Activated CD4-positive, alpha-beta T cell treated with anti-CD3 and anti-CD28 coated beads, Interleukin-2, amount 10 ng/mL, durations not matched to agents 24 days and 14 days (primary cell): ENCODE measurements at regions of chr10 and their contacts with region 1.

Region 1: GRCh38 chr10:28179006-28179742 is 123.7 kb downstream of the MPP7 start:
- DNase-seq: peak; percentile 85
- H3K4me3 Mint-ChIP-seq: peak overlapping the region; percentile 76
- H3K27ac Mint-ChIP-seq: peak overlapping the region; percentile 85
- H3K4me1 Mint-ChIP-seq: peaks cover 23% of the 10 kb centered on the region
- H3K27me3 Mint-ChIP-seq: peaks cover 8% of the 10 kb centered on the region

Region 2: GRCh38 chr10:27446091-27446918 is 732.9 kb before region 1 on chr10:
- intact Hi-C with region 1: loop called (anchors 1 kb)
- DNase-seq: no peak
- H3K4me3 Mint-ChIP-seq: no peak overlapping the region
- H3K27ac Mint-ChIP-seq: no peak overlapping the region
- H3K4me1 Mint-ChIP-seq: peaks cover 8% of the 10 kb centered on the region
- H3K27me3 Mint-ChIP-seq: peaks cover 14% of the 10 kb centered on the region

Region 3: GRCh38 chr10:27536437-27536836 is 642.7 kb before region 1 on chr10:
- intact Hi-C with region 1: no loop called
- DNase-seq: no peak
- H3K4me3 Mint-ChIP-seq: no peak overlapping the region
- H3K27ac Mint-ChIP-seq: no peak overlapping the region
- H3K4me1 Mint-ChIP-seq: peaks cover 13% of the 10 kb centered on the region
- H3K27me3 Mint-ChIP-seq: no peaks in the 10 kb centered on the region

Region 4: GRCh38 chr10:28217848-28218247 is 38.7 kb after region 1 on chr10:
- intact Hi-C with region 1: loop called (anchors 2 kb)
- DNase-seq: no peak
- H3K4me3 Mint-ChIP-seq: no peak overlapping the region
- H3K27ac Mint-ChIP-seq: no peak overlapping the region
- H3K4me1 Mint-ChIP-seq: peaks cover 6% of the 10 kb centered on the region
- H3K27me3 Mint-ChIP-seq: peaks cover 7% of the 10 kb centered on the region